ENCODE measurements at regions of chr7 and their contacts with region 1.

Region 1: DNA sequence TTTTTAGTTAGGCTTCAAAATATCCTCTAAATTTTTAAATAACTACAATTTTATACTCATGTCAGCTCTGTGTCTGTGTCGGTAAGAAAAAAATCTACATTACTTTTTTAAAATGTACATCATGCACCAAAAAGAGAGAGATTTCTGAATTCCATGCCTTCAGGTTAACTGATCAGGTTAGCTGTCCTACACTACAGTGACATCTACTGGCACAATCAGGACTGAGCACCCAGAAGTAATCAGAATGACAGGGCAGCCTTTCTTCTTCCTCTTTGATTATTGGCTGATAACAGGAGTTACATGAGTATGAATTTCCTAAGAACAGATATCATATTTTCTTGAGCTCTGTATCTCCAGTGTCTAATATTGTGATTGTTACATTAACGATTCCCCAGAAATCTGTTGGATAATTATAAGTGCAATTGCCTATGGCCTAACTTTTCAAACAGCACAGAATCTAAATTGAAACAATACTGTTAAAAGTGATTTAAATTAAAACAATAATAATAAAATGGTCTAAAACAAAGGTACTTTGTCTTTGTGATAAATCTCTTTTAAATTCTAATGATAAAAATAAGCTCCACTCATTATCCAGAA is 41.8 kb upstream of the HYCC1 start:
- DNase-seq: peak; percentile 74
- ATAC-seq: peak; percentile 97
- H3K4me3 Mint-ChIP-seq: no peak overlapping the region
- H3K27ac Mint-ChIP-seq: no peak overlapping the region
- H3K4me1 Mint-ChIP-seq: peaks cover under 1% of the 10 kb centered on the region
- H3K27me3 Mint-ChIP-seq: no peaks in the 10 kb centered on the region
- CTCF ChIP-seq: peak; percentile 96

Region 2: GRCh38 chr7:22559829-22560489 is 495.7 kb before region 1 on chr7:
- CTCF ChIA-PET with region 1: interaction called, 76 read pairs
- POLR2A ChIA-PET with region 1: no interaction called
- intact Hi-C with region 1: loop called (anchors 5 kb)
- DNase-seq: peak; percentile 83
- ATAC-seq: peak; percentile 82
- H3K4me3 Mint-ChIP-seq: no peak overlapping the region
- H3K27ac Mint-ChIP-seq: no peak overlapping the region
- H3K4me1 Mint-ChIP-seq: peaks cover 25% of the 10 kb centered on the region
- H3K27me3 Mint-ChIP-seq: peaks cover 21% of the 10 kb centered on the region
- CTCF ChIP-seq: peak; percentile 90

Region 3: GRCh38 chr7:22822486-22823141 is 233.1 kb before region 1 on chr7 and contains the start of gene TOMM7:
- CTCF ChIA-PET with region 1: interaction called, 18 read pairs
- POLR2A ChIA-PET with region 1: no interaction called
- intact Hi-C with region 1: no loop called
- DNase-seq: peak; percentile 91
- ATAC-seq: peak; percentile 95
- H3K4me3 Mint-ChIP-seq: peak within 1 kb of the TSS; percentile 99
- H3K27ac Mint-ChIP-seq: peak within 1 kb of the TSS; percentile 98
- H3K4me1 Mint-ChIP-seq: peaks cover 37% of the 10 kb centered on the region
- H3K27me3 Mint-ChIP-seq: peaks cover 13% of the 10 kb centered on the region
- CTCF ChIP-seq: no peak
- total RNA-seq, gene TOMM7: 206 to 240 TPM

Region 4: DNA sequence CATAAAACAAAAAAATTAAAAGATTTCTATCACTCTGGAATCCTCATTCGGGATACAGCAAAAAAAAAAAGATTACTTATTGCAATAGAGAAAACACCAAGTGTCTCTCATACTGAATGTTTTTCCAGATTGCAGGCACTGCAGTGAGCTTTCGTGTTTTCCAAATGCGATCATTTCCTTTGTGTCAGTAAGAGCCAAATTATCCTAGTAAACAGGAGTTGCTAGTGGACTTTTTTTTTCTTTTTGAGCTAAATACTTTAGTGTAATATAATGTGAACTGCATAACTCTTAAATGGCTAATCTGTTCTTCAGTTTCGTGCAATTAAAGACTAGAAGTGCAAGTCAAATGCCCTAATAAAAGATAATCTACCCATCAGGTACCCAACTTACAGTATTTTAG is 188.7 kb before region 1 on chr7:
- CTCF ChIA-PET with region 1: interaction called, 10 read pairs
- POLR2A ChIA-PET with region 1: no interaction called
- intact Hi-C with region 1: no loop called
- DNase-seq: no peak
- ATAC-seq: no peak
- H3K4me3 Mint-ChIP-seq: no peak overlapping the region
- H3K27ac Mint-ChIP-seq: no peak overlapping the region
- H3K4me1 Mint-ChIP-seq: peaks cover 26% of the 10 kb centered on the region
- H3K27me3 Mint-ChIP-seq: no peaks in the 10 kb centered on the region
- CTCF ChIP-seq: no peak

Region 5: GRCh38 chr7:22972207-22972606 is 83.5 kb before region 1 on chr7:
- CTCF ChIA-PET with region 1: interaction called, 28 read pairs
- POLR2A ChIA-PET with region 1: no interaction called
- intact Hi-C with region 1: no loop called
- DNase-seq: no peak
- ATAC-seq: no peak
- H3K4me3 Mint-ChIP-seq: no peak overlapping the region
- H3K27ac Mint-ChIP-seq: no peak overlapping the region
- H3K4me1 Mint-ChIP-seq: peaks cover 4% of the 10 kb centered on the region
- H3K27me3 Mint-ChIP-seq: no peaks in the 10 kb centered on the region
- CTCF ChIP-seq: no peak

Region 6: DNA sequence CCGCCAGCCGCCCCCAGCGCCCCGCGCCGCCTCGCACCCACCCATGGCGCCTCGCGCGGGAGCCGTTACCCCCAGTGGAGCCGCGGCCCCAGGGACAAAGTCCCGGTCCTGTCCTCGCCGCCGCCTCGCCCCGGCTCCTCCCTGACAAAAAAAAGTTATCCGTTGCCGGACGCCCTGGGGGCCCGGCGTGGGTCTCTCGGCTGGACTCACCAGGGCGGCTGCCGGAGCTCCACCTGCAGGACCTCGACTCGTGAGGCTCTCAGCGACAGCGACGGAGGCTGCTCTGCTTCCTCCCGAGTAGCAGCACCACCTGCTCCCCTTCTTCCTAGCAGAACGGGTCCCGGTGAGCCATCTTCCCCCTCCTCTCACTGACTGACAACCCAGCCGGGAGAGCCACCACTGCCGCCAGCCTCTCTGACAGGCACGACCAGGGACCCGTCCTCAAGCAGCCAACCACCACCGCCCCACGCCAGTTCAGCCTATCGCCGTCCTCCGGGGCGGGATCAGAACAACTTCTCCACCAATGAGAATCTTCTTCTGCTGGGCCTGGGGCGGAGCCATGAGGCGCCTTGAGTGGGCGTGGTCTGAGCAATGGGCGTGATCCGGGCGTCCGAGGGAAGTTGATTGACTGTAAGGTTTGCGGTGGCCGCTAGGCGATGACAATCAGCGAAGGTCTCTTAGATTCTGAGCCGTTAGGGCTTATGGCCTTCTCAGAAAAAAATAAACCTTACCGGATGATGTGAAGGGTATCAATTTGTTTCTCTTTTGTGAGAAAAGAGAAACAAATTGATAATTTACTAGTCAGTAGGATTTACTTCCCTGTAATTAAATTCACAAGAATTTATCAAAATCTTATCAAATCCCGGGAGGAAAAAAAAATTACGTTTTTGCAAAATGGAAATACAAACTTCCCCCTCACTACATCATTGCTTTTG is 41.7 kb before region 1 on chr7 and contains the start of gene HYCC1:
- CTCF ChIA-PET with region 1: interaction called, 22 read pairs
- POLR2A ChIA-PET with region 1: no interaction called
- intact Hi-C with region 1: no loop called
- DNase-seq: peak; percentile 100
- ATAC-seq: peak; percentile 99
- H3K4me3 Mint-ChIP-seq: peak within 1 kb of the TSS; percentile 82
- H3K27ac Mint-ChIP-seq: peak within 1 kb of the TSS; percentile 86
- H3K4me1 Mint-ChIP-seq: peaks cover 18% of the 10 kb centered on the region
- H3K27me3 Mint-ChIP-seq: no peaks in the 10 kb centered on the region
- CTCF ChIP-seq: peak; percentile 66
- total RNA-seq, gene HYCC1: 17.8 to 18.5 TPM

Region 7: GRCh38 chr7:23072048-23072447 is 16.4 kb after region 1 on chr7:
- CTCF ChIA-PET with region 1: interaction called, 14 read pairs
- POLR2A ChIA-PET with region 1: no interaction called
- intact Hi-C with region 1: no loop called
- DNase-seq: no peak
- ATAC-seq: no peak
- H3K4me3 Mint-ChIP-seq: no peak overlapping the region
- H3K27ac Mint-ChIP-seq: no peak overlapping the region
- H3K4me1 Mint-ChIP-seq: no peaks in the 10 kb centered on the region
- H3K27me3 Mint-ChIP-seq: peaks cover 10% of the 10 kb centered on the region
- CTCF ChIP-seq: no peak